ENCODE measurements at regions of chr17 and their contacts with region 1.

Region 1: DNA sequence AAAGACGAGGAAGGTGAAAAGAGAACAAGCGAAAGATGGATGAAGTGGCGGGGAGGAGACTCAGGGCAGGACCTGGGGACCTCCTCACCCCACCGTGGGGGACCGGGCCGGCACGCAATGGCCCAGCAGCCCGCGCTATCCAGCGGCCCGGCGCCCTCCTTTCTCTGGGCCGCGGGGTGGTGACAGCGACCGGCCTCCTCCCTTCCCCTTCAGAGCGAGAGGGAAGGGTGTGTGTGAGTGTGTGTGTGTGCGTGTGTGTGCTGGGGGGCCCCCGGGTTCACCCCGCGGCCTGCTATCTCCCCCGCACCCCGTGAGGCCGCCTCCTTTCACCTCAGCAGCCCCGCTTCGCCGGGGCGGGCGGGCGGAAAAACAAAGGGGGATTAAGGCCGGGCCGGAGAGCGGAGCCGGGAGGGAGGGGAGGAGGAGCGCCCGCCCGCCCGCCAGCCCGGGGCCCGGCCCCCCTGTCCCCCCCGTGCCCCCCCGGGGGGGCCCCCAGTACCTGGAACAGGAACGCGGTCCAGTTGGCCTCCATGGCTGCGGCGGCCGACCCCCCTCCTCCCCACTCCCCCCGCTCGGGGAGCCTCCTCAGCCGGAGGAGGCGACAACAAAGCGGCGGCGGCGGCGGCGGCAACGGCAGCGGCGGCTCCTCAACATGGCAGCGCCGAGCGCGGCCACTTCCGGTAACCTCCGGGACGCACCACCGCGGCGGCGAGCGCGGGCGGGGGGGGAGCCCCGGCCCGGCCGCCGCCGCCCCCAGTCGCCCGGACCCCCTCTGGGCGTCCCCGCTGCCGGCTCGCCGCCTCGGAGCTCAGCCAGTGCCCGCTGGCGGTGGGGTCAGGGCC is at the start of gene VEZF1:
- DNase-seq: peak; percentile 82
- ATAC-seq: peak; percentile 73
- H3K4me3 Mint-ChIP-seq: peak within 1 kb of the TSS; percentile 94
- H3K27ac Mint-ChIP-seq: peak within 1 kb of the TSS; percentile 93
- H3K4me1 Mint-ChIP-seq: peaks cover 54% of the 10 kb centered on the region
- H3K27me3 Mint-ChIP-seq: no peaks in the 10 kb centered on the region
- CTCF ChIP-seq: no peak
- total RNA-seq, gene VEZF1: 40.5 and 45.1 TPM in 2 replicates

Region 2: DNA sequence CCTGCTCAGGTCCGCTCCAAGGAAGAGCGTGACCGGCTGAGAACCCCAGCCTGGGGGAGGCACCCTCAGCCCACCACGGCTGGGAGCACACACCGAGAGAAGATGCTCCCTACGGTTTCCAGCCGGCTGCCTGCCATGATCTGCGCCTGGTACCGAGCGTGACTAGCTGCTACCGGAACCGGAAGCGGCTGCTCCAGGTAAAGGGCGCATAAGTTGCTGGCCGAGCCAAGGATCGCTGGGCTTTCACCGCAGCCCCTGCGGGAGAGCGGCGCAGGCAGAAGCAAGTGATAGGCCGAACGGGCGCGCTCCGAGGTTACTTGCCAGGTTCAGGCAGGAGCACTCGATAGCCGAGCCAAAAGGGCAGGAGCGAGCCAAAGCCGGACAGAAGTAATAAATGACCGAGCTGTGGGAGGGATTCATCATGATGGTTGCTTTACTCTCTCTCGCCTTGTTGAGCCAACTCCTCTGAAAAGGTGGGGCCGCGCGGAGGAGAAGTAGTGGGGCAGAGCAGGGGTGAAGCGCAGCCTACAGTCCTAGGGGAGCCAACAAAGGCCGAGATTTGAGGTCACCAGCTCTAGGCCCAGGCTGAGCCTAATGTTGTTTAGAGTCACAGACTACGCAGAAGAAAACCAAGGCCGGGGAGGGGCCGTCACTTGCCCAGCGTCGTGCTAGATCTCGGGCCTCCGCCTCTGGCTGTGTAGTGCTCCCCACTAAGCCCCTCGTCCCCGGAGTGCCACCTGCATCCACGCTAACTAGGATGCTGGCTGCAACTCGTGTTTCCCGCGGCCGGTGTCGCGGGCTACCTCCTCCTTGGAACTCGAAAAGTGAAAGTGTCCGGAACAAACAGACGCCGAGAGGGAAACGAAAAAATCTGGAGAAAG is 137.7 kb before region 1 on chr17 and contains the start of gene MRPS23:
- CTCF ChIA-PET with region 1: interaction called, 4 read pairs
- POLR2A ChIA-PET with region 1: interaction called, 11 read pairs
- intact Hi-C with region 1: loop called (anchors 1 kb)
- DNase-seq: peak; percentile 87
- ATAC-seq: peak; percentile 95
- H3K4me3 Mint-ChIP-seq: peak within 1 kb of the TSS; percentile 93
- H3K27ac Mint-ChIP-seq: peak within 1 kb of the TSS; percentile 96
- H3K4me1 Mint-ChIP-seq: peaks cover 38% of the 10 kb centered on the region
- H3K27me3 Mint-ChIP-seq: no peaks in the 10 kb centered on the region
- CTCF ChIP-seq: no peak
- total RNA-seq, gene MRPS23: 37.9 and 47.4 TPM in 2 replicates

Region 3: DNA sequence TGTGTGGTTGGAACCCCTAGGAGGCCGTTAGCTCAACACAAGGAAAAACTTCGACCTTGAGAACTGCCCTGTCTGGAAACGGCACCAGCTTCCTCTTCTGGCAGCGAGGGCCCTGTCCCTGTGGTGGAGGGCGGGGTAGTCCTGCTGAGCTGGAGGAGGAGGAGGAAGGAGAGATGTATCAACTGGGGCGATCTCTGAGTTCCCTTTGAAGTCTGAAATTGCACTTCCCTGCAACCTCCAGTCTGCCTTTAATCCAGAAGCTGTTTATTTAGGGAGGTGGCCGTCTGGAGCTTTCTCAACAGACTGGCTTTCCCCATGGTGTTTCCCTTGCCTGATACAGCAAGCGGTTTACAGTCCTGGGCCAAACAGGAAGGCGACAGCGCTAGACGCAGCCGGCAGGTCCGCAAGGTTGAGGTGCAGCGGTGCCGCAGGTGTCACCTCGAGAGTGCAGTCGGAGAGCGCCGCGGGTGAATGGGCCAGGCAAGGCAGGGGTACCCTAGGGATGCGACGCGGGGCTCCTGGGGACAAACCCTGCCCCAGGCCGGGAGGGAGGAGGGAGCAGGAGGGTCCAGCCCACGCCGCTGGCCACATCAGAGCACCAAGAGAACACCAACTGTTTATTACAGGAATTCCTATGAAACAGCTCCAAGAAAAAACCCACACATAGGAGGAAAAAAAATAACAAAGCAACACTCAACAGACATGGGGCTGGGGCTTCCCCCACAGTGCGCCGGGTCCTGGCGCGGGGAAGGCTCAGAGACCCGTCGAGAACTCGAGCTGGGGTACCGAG is 126.6 kb before region 1 on chr17:
- CTCF ChIA-PET with region 1: interaction called, 11 read pairs
- POLR2A ChIA-PET with region 1: interaction called, 3 read pairs
- intact Hi-C with region 1: no loop called
- DNase-seq: no peak
- ATAC-seq: peak; percentile 69
- H3K4me3 Mint-ChIP-seq: peak overlapping the region; percentile 79
- H3K27ac Mint-ChIP-seq: no peak overlapping the region
- H3K4me1 Mint-ChIP-seq: peaks cover 14% of the 10 kb centered on the region
- H3K27me3 Mint-ChIP-seq: peaks cover 21% of the 10 kb centered on the region
- CTCF ChIP-seq: no peak

Region 4: GRCh38 chr17:57939797-57940196 is 48.0 kb before region 1 on chr17:
- CTCF ChIA-PET with region 1: no interaction called
- POLR2A ChIA-PET with region 1: interaction called, 10 read pairs
- intact Hi-C with region 1: no loop called
- DNase-seq: peak; percentile 68
- ATAC-seq: peak; percentile 94
- H3K4me3 Mint-ChIP-seq: peak overlapping the region; percentile 50
- H3K27ac Mint-ChIP-seq: peak overlapping the region; percentile 35
- H3K4me1 Mint-ChIP-seq: peaks cover 34% of the 10 kb centered on the region
- H3K27me3 Mint-ChIP-seq: peaks cover 47% of the 10 kb centered on the region
- CTCF ChIP-seq: no peak

Region 5: GRCh38 chr17:57946798-57947358 is 40.9 kb before region 1 on chr17:
- CTCF ChIA-PET with region 1: no interaction called
- POLR2A ChIA-PET with region 1: interaction called, 10 read pairs
- intact Hi-C with region 1: loop called (anchors 5 kb)
- DNase-seq: peak; percentile 22
- ATAC-seq: peak; percentile 88
- H3K4me3 Mint-ChIP-seq: peak overlapping the region; percentile 76
- H3K27ac Mint-ChIP-seq: peak overlapping the region; percentile 6
- H3K4me1 Mint-ChIP-seq: peaks cover 52% of the 10 kb centered on the region
- H3K27me3 Mint-ChIP-seq: peaks cover 39% of the 10 kb centered on the region
- CTCF ChIP-seq: no peak

Region 6: GRCh38 chr17:57955183-57955931 is 32.4 kb before region 1 on chr17 and contains the start of gene CUEDC1:
- CTCF ChIA-PET with region 1: no interaction called
- POLR2A ChIA-PET with region 1: interaction called, 4 read pairs
- intact Hi-C with region 1: loop called (anchors 2 kb)
- DNase-seq: peak; percentile 62
- ATAC-seq: peak; percentile 76
- H3K4me3 Mint-ChIP-seq: peak within 1 kb of the TSS; percentile 72
- H3K27ac Mint-ChIP-seq: no peak within 1 kb of the TSS
- H3K4me1 Mint-ChIP-seq: peaks cover 32% of the 10 kb centered on the region
- H3K27me3 Mint-ChIP-seq: peaks cover 64% of the 10 kb centered on the region
- CTCF ChIP-seq: no peak
- total RNA-seq, gene CUEDC1: not detected in 2 replicates